Calu3 (cell line): ENCODE measurements at regions of chr3 and their contacts with region 1.

Region 1: DNA sequence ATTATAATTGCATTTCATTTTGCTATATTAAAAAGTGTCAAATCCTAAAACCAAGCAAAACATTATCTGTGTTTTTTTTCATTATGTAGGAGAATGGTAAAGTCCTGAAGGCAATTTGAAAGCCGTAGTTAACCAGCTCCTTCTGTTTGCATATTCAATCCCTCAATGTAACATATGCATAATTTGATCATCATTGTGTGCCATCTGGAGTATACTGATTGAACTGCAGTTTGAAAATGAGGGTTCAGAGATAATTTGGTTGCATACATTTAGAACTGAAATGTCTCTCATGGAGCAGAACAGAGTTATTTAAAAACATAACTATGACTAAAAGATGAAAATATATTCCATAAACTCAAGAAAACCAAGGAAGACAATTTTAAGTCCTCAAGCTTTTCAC is 518.6 kb downstream of the GBE1 start:
- DNase-seq: no peak
- H3K4me3 Mint-ChIP-seq: no peak overlapping the region
- H3K27ac Mint-ChIP-seq: no peak overlapping the region
- H3K4me1 Mint-ChIP-seq: no peaks in the 10 kb centered on the region
- H3K27me3 Mint-ChIP-seq: no peaks in the 10 kb centered on the region
- CTCF ChIP-seq: no peak

Region 2: DNA sequence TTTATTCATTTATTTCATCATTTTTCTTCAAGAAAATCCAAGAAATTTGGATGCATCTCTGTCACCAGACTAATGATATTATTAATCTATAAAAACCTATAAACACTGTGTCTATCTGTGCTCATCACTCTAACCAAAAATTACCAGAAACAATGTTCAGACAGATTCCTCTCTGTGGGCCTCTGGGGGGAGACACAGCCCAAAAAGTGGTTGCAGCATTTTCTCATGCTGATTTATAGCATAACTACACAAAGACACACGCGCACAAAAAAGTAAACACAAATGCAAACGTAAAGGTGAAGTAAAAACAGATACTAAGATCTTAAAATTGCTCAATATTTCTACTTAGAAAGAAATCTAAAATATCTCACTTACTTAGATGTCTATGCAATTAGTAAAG is 457.4 kb before region 1 on chr3:
- CTCF ChIA-PET with region 1: interaction called, 4 read pairs
- intact Hi-C with region 1: loop called (anchors 5 kb)
- DNase-seq: peak; percentile 11
- H3K4me3 Mint-ChIP-seq: no peak overlapping the region
- H3K27ac Mint-ChIP-seq: no peak overlapping the region
- H3K4me1 Mint-ChIP-seq: no peaks in the 10 kb centered on the region
- H3K27me3 Mint-ChIP-seq: no peaks in the 10 kb centered on the region
- CTCF ChIP-seq: no peak